ENCODE measurements at regions of chr3 and their contacts with region 1.

Region 1: GRCh38 chr3:160187288-160187687 is 37.9 kb upstream of the C3orf80 start:
- DNase-seq: no peak
- ATAC-seq: no peak
- H3K4me3 Mint-ChIP-seq: no peak overlapping the region
- H3K27ac Mint-ChIP-seq: no peak overlapping the region
- H3K4me1 Mint-ChIP-seq: no peaks in the 10 kb centered on the region
- H3K27me3 Mint-ChIP-seq: no peaks in the 10 kb centered on the region
- CTCF ChIP-seq: no peak

Region 2: GRCh38 chr3:160038862-160039562 is 148.3 kb before region 1 on chr3:
- CTCF ChIA-PET with region 1: no interaction called
- POLR2A ChIA-PET with region 1: interaction called, 10 read pairs
- DNase-seq: peak; percentile 54
- ATAC-seq: peak; percentile 83
- H3K4me3 Mint-ChIP-seq: peak overlapping the region; percentile 73
- H3K27ac Mint-ChIP-seq: no peak overlapping the region
- H3K4me1 Mint-ChIP-seq: peaks cover 14% of the 10 kb centered on the region
- H3K27me3 Mint-ChIP-seq: peaks cover 28% of the 10 kb centered on the region
- CTCF ChIP-seq: no peak

Region 3: GRCh38 chr3:160200353-160200752 is 13.1 kb after region 1 on chr3:
- CTCF ChIA-PET with region 1: no interaction called
- POLR2A ChIA-PET with region 1: no interaction called
- DNase-seq: no peak
- ATAC-seq: no peak
- H3K4me3 Mint-ChIP-seq: no peak overlapping the region
- H3K27ac Mint-ChIP-seq: no peak overlapping the region
- H3K4me1 Mint-ChIP-seq: no peaks in the 10 kb centered on the region
- H3K27me3 Mint-ChIP-seq: no peaks in the 10 kb centered on the region
- CTCF ChIP-seq: no peak

Region 4: DNA sequence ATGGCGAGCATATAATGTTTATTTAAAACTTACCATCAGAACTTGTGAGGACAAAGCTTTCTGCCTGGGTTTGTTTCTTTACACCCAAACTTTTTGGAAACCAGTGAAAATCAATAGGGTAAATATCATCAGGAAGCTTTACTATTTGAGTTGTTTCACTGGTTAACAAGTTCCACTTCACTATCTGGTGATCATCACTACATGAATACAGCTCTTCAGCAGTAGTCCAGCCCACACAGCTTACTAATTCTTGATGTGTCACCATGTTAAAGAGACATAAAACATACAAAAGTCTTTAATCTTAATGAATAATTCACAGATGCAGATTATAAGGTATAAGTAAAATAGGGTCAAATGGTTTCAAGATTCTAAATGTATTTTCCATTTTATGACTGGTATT is 194.2 kb after region 1 on chr3:
- CTCF ChIA-PET with region 1: no interaction called
- POLR2A ChIA-PET with region 1: no interaction called
- DNase-seq: no peak
- ATAC-seq: no peak
- H3K4me3 Mint-ChIP-seq: no peak overlapping the region
- H3K27ac Mint-ChIP-seq: no peak overlapping the region
- H3K4me1 Mint-ChIP-seq: peaks cover 39% of the 10 kb centered on the region
- H3K27me3 Mint-ChIP-seq: no peaks in the 10 kb centered on the region
- CTCF ChIP-seq: no peak

Region 5: DNA sequence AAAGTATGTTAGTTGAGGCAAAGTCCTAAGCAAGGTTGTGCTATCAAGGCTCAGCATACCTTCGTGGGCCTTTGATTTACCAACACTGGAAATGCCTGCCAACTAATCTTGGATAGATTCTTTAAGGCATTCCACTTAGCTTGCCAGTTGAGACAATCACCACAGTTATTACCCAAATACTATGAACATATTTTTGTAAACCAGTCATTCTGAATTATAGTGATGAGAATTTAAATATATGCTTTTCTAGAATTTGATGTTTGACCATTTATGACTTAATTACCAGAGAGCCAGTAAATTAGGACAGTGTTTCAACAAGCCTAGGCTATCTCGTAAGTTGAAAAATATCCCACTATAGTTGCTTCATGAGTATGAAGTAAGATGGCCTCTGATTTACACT is 246.8 kb after region 1 on chr3:
- CTCF ChIA-PET with region 1: no interaction called
- POLR2A ChIA-PET with region 1: no interaction called
- DNase-seq: no peak
- ATAC-seq: no peak
- H3K4me3 Mint-ChIP-seq: no peak overlapping the region
- H3K27ac Mint-ChIP-seq: no peak overlapping the region
- H3K4me1 Mint-ChIP-seq: peaks cover 8% of the 10 kb centered on the region; the same call in 1 of the 2 replicates
- H3K27me3 Mint-ChIP-seq: no peaks in the 10 kb centered on the region
- CTCF ChIP-seq: no peak